ENCODE measurements at regions of chr4 and their contacts with region 1.

Region 1: GRCh38 chr4:120071192-120071795 is 4.6 kb upstream of the MAD2L1 start:
- DNase-seq: peak; percentile 80
- ATAC-seq: no peak; the same call in 1 of the 2 replicates
- H3K4me3 ChIP-seq: no peak overlapping the region
- H3K27ac ChIP-seq: no peak overlapping the region
- H3K4me1 ChIP-seq: peaks cover 7% of the 10 kb centered on the region
- H3K27me3 ChIP-seq: no peaks in the 10 kb centered on the region
- CTCF ChIP-seq: peak; percentile 75
- POLR2A ChIP-seq: no peak
- RAD21 ChIP-seq: peak; percentile 75

Region 2: GRCh38 chr4:120096508-120097297 is 25.4 kb after region 1 on chr4:
- CTCF ChIA-PET with region 1: no interaction called
- POLR2A ChIA-PET with region 1: no interaction called
- dilution Hi-C with region 1: no loop called
- in situ Hi-C with region 1: no loop called
- intact Hi-C with region 1: no loop called
- DNase-seq: peak; percentile 5
- ATAC-seq: peak; percentile 78
- H3K4me3 ChIP-seq: no peak overlapping the region
- H3K27ac ChIP-seq: no peak overlapping the region
- H3K4me1 ChIP-seq: no peaks in the 10 kb centered on the region
- H3K27me3 ChIP-seq: no peaks in the 10 kb centered on the region; the same call in 1 of the 2 replicates
- CTCF ChIP-seq: no peak
- POLR2A ChIP-seq: no peak
- RAD21 ChIP-seq: no peak

Region 3: GRCh38 chr4:121096629-121097028 is 1025.3 kb after region 1 on chr4:
- CTCF ChIA-PET with region 1: no interaction called
- POLR2A ChIA-PET with region 1: no interaction called
- dilution Hi-C with region 1: no loop called
- in situ Hi-C with region 1: loop called (anchors 10 kb)
- intact Hi-C with region 1: loop called (anchors 1 kb)
- DNase-seq: peak; percentile 52
- ATAC-seq: 0 out of 2 replicates have a peak, but pooled peaks have one; percentile 29
- H3K4me3 ChIP-seq: no peak overlapping the region
- H3K27ac ChIP-seq: no peak overlapping the region
- H3K4me1 ChIP-seq: no peaks in the 10 kb centered on the region
- H3K27me3 ChIP-seq: peaks cover 2% of the 10 kb centered on the region; the same call in 1 of the 2 replicates
- CTCF ChIP-seq: peak; percentile 73
- POLR2A ChIP-seq: no peak
- RAD21 ChIP-seq: peak; percentile 72

Measured in IMR-90 (cell line).